ENCODE measurements at regions of chr6 and their contacts with region 1.

Region 1: GRCh38 chr6:151690768-151691562 is 116.5 kb upstream of the ESR1 start:
- DNase-seq: no peak
- ATAC-seq: peak; percentile 89
- H3K4me3 Mint-ChIP-seq: peak overlapping the region; percentile 79
- H3K27ac Mint-ChIP-seq: peak overlapping the region; percentile 88
- H3K4me1 Mint-ChIP-seq: peaks cover 32% of the 10 kb centered on the region
- H3K27me3 Mint-ChIP-seq: no peaks in the 10 kb centered on the region
- CTCF ChIP-seq: no peak

Region 2: DNA sequence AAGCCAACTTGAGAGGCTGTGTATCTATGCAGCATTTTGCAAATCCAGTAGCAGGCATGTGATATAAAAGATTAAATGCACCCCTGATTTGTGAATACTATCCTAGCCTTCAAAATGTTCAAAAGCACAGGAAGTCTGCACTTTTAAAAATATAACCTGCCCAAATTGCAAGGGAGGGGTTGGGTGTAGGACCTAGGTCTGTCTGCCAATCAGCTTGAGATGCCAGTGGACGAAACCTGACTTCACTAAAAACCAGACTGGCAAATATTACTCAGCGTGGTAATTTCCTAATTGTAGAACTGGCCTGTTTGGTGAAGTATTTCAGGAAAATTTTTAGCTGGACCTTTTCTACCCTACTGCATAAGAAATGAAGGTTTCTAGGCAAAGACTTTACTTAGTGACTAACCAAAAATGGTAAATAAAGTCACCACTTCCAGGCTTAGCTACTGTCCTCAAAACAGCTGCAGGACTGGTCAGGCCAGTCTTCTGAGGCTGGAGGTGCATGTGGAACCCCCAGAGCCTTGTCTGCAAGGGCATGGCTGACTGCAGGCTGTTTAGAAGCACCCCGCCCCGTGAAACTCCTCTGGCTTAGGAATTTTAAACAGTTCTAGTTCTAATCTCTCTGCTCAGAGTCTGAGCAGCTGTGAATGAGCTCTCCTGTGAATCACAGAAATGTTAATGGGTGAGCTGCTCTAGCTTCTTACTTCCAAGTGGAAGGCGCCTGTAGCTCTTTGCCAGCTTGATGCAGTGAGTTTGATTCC is 12.1 kb after region 1 on chr6:
- CTCF ChIA-PET with region 1: interaction called, 14 read pairs
- POLR2A ChIA-PET with region 1: interaction called, 67 read pairs
- intact Hi-C with region 1: loop called (anchors 1 kb)
- DNase-seq: no peak
- ATAC-seq: peak; percentile 49
- H3K4me3 Mint-ChIP-seq: peak overlapping the region; percentile 60
- H3K27ac Mint-ChIP-seq: peak overlapping the region; percentile 82
- H3K4me1 Mint-ChIP-seq: peaks cover 46% of the 10 kb centered on the region
- H3K27me3 Mint-ChIP-seq: no peaks in the 10 kb centered on the region
- CTCF ChIP-seq: no peak

Region 3: DNA sequence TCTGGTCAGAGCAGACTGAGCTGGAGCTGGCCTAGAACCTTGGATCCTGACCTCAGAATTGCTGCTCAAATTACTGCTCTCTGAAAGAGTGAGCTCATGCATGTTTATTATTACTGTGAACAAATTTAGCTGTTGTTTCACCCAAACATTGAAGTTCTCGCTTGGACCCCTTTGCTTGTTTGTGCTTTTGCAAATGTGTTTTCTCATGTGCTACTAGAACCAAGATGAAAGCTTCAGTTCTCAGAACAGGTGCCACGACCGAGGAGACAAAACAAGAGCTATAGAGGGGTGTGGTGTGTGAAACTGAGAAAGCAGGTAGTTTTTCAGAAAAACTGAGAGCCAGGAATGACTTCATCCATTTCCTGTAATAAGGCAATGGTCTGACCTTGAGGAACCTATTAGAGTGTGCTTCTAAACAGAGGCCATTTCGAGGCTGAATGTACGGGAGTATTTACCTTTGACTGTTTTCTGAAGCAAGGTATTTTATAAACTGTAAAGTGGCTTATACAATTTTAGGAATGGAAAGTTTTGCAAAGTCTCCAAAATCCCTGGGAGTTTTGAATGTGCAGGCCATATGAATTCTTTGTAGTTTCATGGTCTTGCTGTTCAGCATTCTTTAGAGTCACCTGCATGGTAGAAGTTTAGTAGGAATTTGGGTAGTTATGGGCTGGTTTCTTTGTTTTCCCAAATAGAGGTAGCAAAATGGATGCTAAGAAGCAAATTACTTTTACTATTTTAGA is 66.7 kb after region 1 on chr6:
- CTCF ChIA-PET with region 1: interaction called, 22 read pairs
- POLR2A ChIA-PET with region 1: interaction called, 20 read pairs
- intact Hi-C with region 1: loop called (anchors 1 kb)
- DNase-seq: no peak
- ATAC-seq: peak; percentile 70
- H3K4me3 Mint-ChIP-seq: peak overlapping the region; percentile 33
- H3K27ac Mint-ChIP-seq: peak overlapping the region; percentile 89
- H3K4me1 Mint-ChIP-seq: peaks cover 32% of the 10 kb centered on the region
- H3K27me3 Mint-ChIP-seq: no peaks in the 10 kb centered on the region
- CTCF ChIP-seq: no peak

Region 4: DNA sequence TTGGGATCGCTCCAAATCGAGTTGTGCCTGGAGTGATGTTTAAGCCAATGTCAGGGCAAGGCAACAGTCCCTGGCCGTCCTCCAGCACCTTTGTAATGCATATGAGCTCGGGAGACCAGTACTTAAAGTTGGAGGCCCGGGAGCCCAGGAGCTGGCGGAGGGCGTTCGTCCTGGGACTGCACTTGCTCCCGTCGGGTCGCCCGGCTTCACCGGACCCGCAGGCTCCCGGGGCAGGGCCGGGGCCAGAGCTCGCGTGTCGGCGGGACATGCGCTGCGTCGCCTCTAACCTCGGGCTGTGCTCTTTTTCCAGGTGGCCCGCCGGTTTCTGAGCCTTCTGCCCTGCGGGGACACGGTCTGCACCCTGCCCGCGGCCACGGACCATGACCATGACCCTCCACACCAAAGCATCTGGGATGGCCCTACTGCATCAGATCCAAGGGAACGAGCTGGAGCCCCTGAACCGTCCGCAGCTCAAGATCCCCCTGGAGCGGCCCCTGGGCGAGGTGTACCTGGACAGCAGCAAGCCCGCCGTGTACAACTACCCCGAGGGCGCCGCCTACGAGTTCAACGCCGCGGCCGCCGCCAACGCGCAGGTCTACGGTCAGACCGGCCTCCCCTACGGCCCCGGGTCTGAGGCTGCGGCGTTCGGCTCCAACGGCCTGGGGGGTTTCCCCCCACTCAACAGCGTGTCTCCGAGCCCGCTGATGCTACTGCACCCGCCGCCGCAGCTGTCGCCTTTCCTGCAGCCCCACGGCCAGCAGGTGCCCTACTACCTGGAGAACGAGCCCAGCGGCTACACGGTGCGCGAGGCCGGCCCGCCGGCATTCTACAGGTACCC is 116.8 kb after region 1 on chr6 and contains the start of gene ESR1:
- CTCF ChIA-PET with region 1: interaction called, 5 read pairs
- POLR2A ChIA-PET with region 1: no interaction called
- intact Hi-C with region 1: loop called (anchors 5 kb)
- DNase-seq: peak; percentile 32
- ATAC-seq: peak; percentile 79
- H3K4me3 Mint-ChIP-seq: peak within 1 kb of the TSS; percentile 84
- H3K27ac Mint-ChIP-seq: no peak within 1 kb of the TSS
- H3K4me1 Mint-ChIP-seq: peaks cover 17% of the 10 kb centered on the region
- H3K27me3 Mint-ChIP-seq: peaks cover 33% of the 10 kb centered on the region
- CTCF ChIP-seq: no peak
- total RNA-seq, gene ESR1: 10.9 and 17.5 TPM in 2 replicates

Region 5: DNA sequence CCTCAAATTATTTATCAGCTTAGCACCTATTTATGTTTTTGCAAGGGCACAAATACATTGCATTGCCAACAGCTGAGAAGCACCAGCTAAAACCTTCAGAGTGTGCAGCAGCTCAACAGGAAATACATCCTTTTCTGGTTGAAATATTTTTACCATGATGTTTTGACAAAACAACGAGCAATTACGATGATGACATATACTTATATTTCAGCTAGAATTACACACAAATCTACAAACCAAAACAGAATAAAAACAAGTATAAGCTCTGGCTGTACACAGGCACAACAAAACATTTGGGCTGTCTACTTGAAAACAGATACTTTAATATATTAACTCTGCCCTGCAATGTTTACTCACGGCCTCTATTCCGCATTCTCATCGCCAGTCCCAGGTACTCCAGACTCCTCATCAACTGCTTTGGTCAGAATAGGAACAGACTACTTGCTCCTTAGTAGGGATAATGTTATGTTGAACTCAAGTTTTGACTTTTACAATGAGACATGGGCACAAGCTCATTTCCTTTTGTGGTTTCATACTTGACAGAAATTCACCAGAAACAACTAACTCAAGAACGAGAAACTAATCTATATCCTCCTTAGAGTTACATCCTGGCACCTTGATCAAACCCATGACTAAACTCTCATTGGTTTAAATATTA is 494.1 kb after region 1 on chr6:
- CTCF ChIA-PET with region 1: interaction called, 4 read pairs
- POLR2A ChIA-PET with region 1: interaction called, 11 read pairs
- intact Hi-C with region 1: no loop called
- DNase-seq: no peak
- ATAC-seq: peak; percentile 63
- H3K4me3 Mint-ChIP-seq: peak overlapping the region; percentile 90
- H3K27ac Mint-ChIP-seq: peak overlapping the region; percentile 99
- H3K4me1 Mint-ChIP-seq: peaks cover 65% of the 10 kb centered on the region
- H3K27me3 Mint-ChIP-seq: no peaks in the 10 kb centered on the region
- CTCF ChIP-seq: no peak

Region 6: DNA sequence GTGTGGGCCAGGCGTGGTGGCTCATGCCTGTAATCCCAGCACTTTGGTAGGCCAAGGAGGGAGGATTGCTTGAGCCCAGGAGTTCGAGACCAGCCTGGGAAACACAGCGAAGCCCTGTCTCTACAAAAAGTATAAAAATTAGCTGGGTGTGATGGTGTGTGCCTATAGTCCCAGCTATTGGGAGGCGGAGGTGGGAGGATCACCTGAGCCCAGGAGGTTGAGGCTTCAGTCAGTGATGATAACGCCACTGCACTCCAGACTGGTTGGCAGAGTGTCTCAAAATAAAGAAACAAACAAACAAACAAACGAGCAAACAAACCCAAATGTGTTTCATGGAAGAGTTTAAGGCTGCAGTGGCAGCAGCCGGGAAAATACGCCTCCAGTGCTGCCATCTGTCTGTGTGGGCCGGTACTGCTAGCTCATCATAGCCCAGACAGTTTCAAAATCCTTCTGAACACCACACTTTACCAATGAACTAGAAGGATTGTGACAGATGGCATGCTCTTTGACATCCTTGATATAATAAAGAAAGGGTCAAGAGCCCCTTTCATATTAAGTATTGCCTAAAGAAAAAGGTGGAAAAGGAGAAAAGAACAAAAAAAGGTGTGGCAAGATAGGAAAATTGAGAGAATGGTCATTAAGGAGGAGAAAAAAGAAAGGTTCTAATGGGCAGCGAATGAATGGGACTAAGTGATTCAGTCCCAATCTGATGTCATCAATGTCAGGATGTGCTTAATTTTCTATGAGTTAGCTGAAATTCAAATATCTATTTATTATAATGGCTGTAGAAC is 647.6 kb after region 1 on chr6:
- CTCF ChIA-PET with region 1: interaction called, 3 read pairs
- POLR2A ChIA-PET with region 1: no interaction called
- intact Hi-C with region 1: loop called (anchors 2 kb)
- DNase-seq: peak; percentile 40
- ATAC-seq: peak; percentile 71
- H3K4me3 Mint-ChIP-seq: no peak overlapping the region
- H3K27ac Mint-ChIP-seq: no peak overlapping the region
- H3K4me1 Mint-ChIP-seq: peaks cover 2% of the 10 kb centered on the region
- H3K27me3 Mint-ChIP-seq: no peaks in the 10 kb centered on the region
- CTCF ChIP-seq: peak; percentile 57